GM12878 (cell line): ENCODE measurements at regions of chr3 and their contacts with region 1.

Region 1: DNA sequence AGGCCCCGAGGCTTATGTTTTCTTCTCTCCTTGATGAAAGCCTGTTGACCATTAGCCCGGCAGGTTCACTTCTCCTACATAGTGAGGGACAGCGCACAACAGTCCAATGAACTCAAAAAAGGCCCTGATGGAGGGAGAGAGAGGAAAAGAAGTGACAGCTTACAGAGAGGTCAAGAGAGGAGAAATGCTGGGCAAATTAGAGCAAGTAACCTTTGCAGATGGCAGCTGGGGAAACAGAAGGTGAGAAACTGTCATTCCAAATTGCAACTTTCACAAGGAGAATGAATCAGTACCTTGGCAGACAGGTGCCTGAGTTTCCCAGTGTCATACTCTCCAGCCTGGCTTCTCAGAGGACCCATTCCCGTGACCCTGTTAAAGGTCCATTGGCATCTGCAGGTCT is 252.0 kb downstream of the EPHB1 start:
- DNase-seq: no peak
- ATAC-seq: no peak
- H3K4me3 ChIP-seq: no peak overlapping the region
- H3K27ac ChIP-seq: no peak overlapping the region
- H3K4me1 ChIP-seq: no peaks in the 10 kb centered on the region
- H3K27me3 ChIP-seq: no peaks in the 10 kb centered on the region
- CTCF ChIP-seq: no peak
- EP300 ChIP-seq: no peak
- POLR2A ChIP-seq: no peak
- RAD21 ChIP-seq: no peak

Region 2: GRCh38 chr3:134929976-134930375 is 117.1 kb before region 1 on chr3:
- CTCF ChIA-PET with region 1: no interaction called
- POLR2A ChIA-PET with region 1: no interaction called
- RAD21 ChIA-PET with region 1: no interaction called
- SMC1A ChIA-PET with region 1: no interaction called
- in situ Hi-C with region 1: no loop called
- intact Hi-C with region 1: no loop called
- DNase-seq: peak; percentile 48
- ATAC-seq: peak; percentile 96
- H3K4me3 ChIP-seq: no peak overlapping the region
- H3K27ac ChIP-seq: peak overlapping the region; percentile 65
- H3K4me1 ChIP-seq: peaks cover 27% of the 10 kb centered on the region
- H3K27me3 ChIP-seq: no peaks in the 10 kb centered on the region
- CTCF ChIP-seq: no peak
- EP300 ChIP-seq: no peak
- POLR2A ChIP-seq: no peak
- RAD21 ChIP-seq: no peak

Region 3: GRCh38 chr3:135034291-135034768 is 12.7 kb before region 1 on chr3:
- CTCF ChIA-PET with region 1: interaction called, 4 read pairs
- POLR2A ChIA-PET with region 1: no interaction called
- RAD21 ChIA-PET with region 1: no interaction called
- SMC1A ChIA-PET with region 1: interaction called, 11 read pairs
- in situ Hi-C with region 1: no loop called
- intact Hi-C with region 1: no loop called
- DNase-seq: no peak
- ATAC-seq: no peak
- H3K4me3 ChIP-seq: no peak overlapping the region
- H3K27ac ChIP-seq: no peak overlapping the region
- H3K4me1 ChIP-seq: no peaks in the 10 kb centered on the region
- H3K27me3 ChIP-seq: no peaks in the 10 kb centered on the region
- CTCF ChIP-seq: no peak
- EP300 ChIP-seq: no peak
- POLR2A ChIP-seq: no peak
- RAD21 ChIP-seq: no peak